A673 (cell line): ENCODE measurements at regions of chrX and their contacts with region 1.

Region 1: GRCh38 chrX:38754102-38754790 is 47.0 kb upstream of the MID1IP1 start:
- DNase-seq: peak; percentile 44
- H3K4me3 ChIP-seq: no peak overlapping the region
- H3K27ac ChIP-seq: no peak overlapping the region
- H3K4me1 ChIP-seq: no peaks in the 10 kb centered on the region
- H3K27me3 ChIP-seq: no peaks in the 10 kb centered on the region
- CTCF ChIP-seq: peak; percentile 70

Region 2: GRCh38 chrX:38192007-38192810 is 562.0 kb before region 1 on chrX:
- CTCF ChIA-PET with region 1: no interaction called
- POLR2A ChIA-PET with region 1: no interaction called
- intact Hi-C with region 1: no loop called
- DNase-seq: peak; percentile 37
- H3K4me3 ChIP-seq: no peak overlapping the region
- H3K27ac ChIP-seq: no peak overlapping the region
- H3K4me1 ChIP-seq: no peaks in the 10 kb centered on the region
- H3K27me3 ChIP-seq: peaks cover 22% of the 10 kb centered on the region
- CTCF ChIP-seq: peak; percentile 47

Region 3: GRCh38 chrX:38335382-38335781 is 418.9 kb before region 1 on chrX:
- CTCF ChIA-PET with region 1: no interaction called
- POLR2A ChIA-PET with region 1: no interaction called
- intact Hi-C with region 1: no loop called
- DNase-seq: peak; percentile 17
- H3K4me3 ChIP-seq: no peak overlapping the region
- H3K27ac ChIP-seq: no peak overlapping the region
- H3K4me1 ChIP-seq: peaks cover 3% of the 10 kb centered on the region
- H3K27me3 ChIP-seq: peaks cover 9% of the 10 kb centered on the region
- CTCF ChIP-seq: peak; percentile 45; the same call in 1 of the 2 replicates

Region 4: DNA sequence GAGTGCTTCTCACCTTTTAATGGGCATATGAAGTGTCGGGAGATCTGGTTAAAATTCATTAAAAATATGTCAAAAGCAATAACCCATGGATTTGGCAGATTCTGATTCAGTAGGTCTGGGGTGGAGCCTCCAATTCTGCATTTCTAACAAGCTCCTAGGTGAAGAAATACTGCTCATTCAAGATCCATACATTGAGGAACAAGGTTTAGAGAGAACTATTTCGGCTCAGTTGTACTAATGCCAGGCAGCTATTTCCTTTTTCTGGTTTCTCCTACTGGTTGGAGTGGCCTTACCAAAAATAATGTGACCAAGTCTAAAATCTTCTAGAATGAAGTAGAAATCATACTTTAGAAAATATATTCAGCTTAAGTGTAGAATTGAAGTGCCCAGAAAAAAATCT is 75.4 kb before region 1 on chrX:
- CTCF ChIA-PET with region 1: no interaction called
- POLR2A ChIA-PET with region 1: no interaction called
- intact Hi-C with region 1: no loop called
- DNase-seq: no peak
- H3K4me3 ChIP-seq: no peak overlapping the region
- H3K27ac ChIP-seq: no peak overlapping the region
- H3K4me1 ChIP-seq: no peaks in the 10 kb centered on the region
- H3K27me3 ChIP-seq: no peaks in the 10 kb centered on the region
- CTCF ChIP-seq: no peak

Region 5: DNA sequence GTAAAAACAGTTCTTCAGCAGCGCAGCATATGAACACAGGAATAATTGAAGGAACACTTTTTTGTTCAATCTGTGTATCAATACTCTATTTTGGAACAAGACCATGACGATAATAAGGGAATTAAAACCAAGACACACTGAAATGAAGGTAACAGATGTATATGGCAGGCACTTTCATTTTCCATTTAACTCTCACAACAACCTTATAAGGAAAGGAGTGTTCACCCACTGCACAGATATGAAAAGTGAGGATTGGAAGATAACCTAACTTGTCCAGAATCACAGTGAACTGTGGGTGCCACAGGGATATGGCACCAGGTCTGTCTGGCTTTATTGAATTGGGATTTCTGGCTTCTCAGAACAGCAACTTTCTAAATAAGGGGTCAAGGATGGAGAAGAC is 200.3 kb after region 1 on chrX:
- CTCF ChIA-PET with region 1: no interaction called
- POLR2A ChIA-PET with region 1: no interaction called
- intact Hi-C with region 1: no loop called
- DNase-seq: no peak
- H3K4me3 ChIP-seq: no peak overlapping the region
- H3K27ac ChIP-seq: no peak overlapping the region
- H3K4me1 ChIP-seq: no peaks in the 10 kb centered on the region
- H3K27me3 ChIP-seq: no peaks in the 10 kb centered on the region
- CTCF ChIP-seq: no peak

Region 6: DNA sequence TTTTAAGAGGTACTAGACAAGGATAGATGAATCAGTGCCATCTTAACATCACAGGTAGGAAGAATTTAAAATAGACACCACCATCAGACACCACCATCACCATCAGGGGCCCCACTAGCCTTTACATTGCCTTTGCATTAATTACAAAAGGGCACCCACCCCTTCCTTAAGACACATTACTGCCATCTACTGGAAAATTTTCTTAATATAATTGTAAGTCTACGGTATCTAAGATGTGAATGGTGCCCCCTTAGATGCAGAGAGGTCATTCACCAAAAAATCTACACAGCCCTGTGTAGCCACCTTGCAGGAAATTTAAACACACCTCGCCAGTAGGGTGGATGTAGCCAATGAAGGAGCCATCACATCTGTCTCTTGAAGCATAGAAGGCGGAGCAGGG is 231.1 kb after region 1 on chrX:
- CTCF ChIA-PET with region 1: no interaction called
- POLR2A ChIA-PET with region 1: no interaction called
- intact Hi-C with region 1: loop called (anchors 2 kb)
- DNase-seq: peak; percentile 51
- H3K4me3 ChIP-seq: no peak overlapping the region
- H3K27ac ChIP-seq: no peak overlapping the region
- H3K4me1 ChIP-seq: no peaks in the 10 kb centered on the region
- H3K27me3 ChIP-seq: no peaks in the 10 kb centered on the region
- CTCF ChIP-seq: peak; percentile 45; the same call in 1 of the 2 replicates

Region 7: DNA sequence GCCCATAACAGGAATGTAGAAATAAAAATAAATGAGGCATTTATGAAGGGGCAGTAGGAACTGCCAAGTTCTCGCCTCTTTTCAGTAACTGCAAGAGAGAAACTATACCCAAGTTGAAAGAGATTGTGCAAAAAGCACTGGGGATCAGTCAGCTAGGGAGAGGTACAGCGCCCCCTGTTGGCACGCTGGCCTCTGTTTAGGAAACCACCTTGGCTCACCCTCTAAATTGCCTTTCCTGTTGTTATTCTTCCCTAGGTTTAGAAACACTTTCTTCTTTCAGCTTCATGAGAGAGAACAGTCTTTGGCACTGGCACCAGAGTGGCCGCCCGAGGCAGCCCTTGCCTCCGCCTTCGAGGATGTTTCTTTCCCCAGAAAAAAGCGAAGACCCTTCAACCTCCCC is 395.5 kb after region 1 on chrX:
- CTCF ChIA-PET with region 1: no interaction called
- POLR2A ChIA-PET with region 1: no interaction called
- intact Hi-C with region 1: loop called (anchors 5 kb)
- DNase-seq: peak; percentile 53
- H3K4me3 ChIP-seq: no peak overlapping the region
- H3K27ac ChIP-seq: no peak overlapping the region
- H3K4me1 ChIP-seq: no peaks in the 10 kb centered on the region
- H3K27me3 ChIP-seq: no peaks in the 10 kb centered on the region
- CTCF ChIP-seq: peak; percentile 83

Region 8: GRCh38 chrX:39242187-39242586 is 487.9 kb after region 1 on chrX:
- CTCF ChIA-PET with region 1: no interaction called
- POLR2A ChIA-PET with region 1: no interaction called
- intact Hi-C with region 1: loop called (anchors 10 kb)
- DNase-seq: peak; percentile 33
- H3K4me3 ChIP-seq: no peak overlapping the region
- H3K27ac ChIP-seq: no peak overlapping the region
- H3K4me1 ChIP-seq: no peaks in the 10 kb centered on the region
- H3K27me3 ChIP-seq: no peaks in the 10 kb centered on the region
- CTCF ChIP-seq: peak; percentile 55